GM23248 (cell line): ENCODE measurements at regions of chr13 and their contacts with region 1.

Region 1: DNA sequence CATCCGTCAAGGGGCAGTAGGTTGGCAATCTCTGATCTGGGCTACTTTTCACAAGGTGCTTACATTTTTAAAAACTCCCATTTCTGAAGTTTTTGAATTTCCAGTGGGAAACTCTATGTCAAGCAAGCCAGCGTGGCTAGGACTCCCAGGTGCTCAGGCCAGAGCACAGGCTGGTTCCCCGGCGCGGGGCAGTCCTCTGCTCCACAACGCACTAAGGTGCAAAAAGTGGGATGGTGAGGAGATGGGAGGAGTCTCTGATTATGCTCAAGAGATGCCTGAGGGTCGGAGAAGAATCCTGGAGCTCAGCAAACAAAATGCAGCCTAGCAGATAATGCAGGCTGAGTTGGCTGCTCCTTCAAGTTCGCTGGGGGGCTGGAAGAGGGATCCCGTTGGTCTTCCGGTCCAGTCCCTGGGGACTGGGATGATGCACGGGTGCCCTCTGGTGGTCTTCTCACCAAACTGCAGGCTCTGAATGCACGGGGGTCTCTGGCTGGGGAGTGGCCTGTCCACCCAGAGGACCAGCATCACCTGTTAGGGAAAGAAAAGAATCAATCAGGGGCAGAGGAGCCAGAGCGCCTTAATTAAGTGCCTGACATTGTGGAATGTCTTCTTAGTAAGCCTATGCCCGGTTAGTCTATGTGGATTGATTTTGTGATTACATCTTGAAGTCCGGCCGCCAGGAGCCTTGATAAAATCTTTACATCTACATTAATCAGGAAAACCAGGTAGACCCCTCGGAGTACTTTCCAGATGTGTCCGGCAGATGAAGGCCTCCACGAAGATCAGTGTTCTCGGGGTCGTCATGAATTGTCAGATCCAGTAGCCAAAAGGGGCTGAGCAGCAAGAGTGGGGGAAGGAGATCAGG is 244.4 kb upstream of the MAB21L1 start:
- DNase-seq: peak; percentile 75
- H3K4me3 ChIP-seq: peak overlapping the region; percentile 65
- H3K27ac ChIP-seq: no peak overlapping the region
- H3K4me1 ChIP-seq: peaks cover 34% of the 10 kb centered on the region
- H3K27me3 ChIP-seq: no peaks in the 10 kb centered on the region

Region 2: DNA sequence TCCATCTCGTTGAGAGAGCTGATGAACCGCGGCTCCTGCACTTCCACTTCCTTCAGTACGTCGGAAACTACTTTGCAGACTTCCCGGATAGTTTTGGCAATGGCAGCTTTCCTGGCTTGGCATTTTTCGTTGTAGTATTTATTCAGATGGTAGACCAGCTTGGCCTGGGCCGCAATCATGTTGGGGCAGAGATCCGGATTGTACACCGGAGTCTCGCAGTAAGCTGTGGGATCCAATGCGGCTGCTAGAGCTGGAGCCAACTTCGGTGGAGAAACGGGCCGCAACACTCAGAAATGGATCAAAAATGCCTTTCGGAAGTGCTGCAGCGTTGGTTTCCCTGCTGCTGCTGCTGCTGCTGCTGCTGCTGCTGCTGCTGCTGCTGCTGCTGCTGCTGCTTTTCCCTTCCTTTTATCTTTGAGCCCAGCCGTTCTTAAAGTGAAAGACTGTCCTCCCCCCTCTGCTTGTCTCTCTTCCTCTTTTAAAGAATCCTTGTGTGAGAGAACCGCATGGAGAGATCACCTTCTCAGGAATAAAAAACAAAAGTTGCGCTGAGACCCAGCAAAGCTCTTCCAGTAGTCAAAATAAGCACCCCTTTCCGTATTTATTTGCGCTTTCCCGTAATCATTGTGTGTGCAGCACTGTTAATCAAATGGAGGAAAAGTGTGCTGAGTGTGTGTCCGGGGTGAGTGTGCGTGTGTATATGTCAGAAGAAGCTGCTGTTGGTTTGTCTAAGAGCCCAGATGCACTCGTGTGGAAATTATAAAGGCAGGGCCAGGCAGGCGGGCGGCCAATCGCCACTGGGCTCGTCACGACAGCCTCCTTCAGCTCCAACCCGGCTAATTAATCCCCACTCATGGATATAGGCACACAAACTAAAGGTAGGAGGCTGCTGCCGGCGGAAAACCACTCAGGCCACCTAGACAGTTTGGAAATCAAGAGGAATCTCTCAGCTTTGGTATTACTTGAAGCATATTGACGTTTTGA is 244.7 kb before region 1 on chr13 and contains the start of gene MAB21L1:
- in situ Hi-C with region 1: loop called (anchors 10 kb)
- DNase-seq: peak; percentile 89
- H3K4me3 ChIP-seq: peak within 1 kb of the TSS; percentile 99
- H3K27ac ChIP-seq: peak within 1 kb of the TSS; percentile 89
- H3K4me1 ChIP-seq: 0 out of 2 replicates have a peak, but pooled peaks cover 5% of the 10 kb centered on the region
- H3K27me3 ChIP-seq: no peaks in the 10 kb centered on the region
- total RNA-seq, gene MAB21L1: 13.1 and 13.4 TPM in 2 replicates